ENCODE measurements at regions of chr15 and their contacts with region 1.

Region 1: GRCh38 chr15:93030430-93031105 is 58.4 kb downstream of the RGMA start:
- DNase-seq: peak; percentile 88

Region 2: GRCh38 chr15:92803847-92804609 is 226.5 kb before region 1 on chr15:
- intact Hi-C with region 1: loop called (anchors 5 kb)
- DNase-seq: peak; percentile 87

Region 3: GRCh38 chr15:93087825-93088199 is 57.2 kb after region 1 on chr15:
- intact Hi-C with region 1: loop called (anchors 2 kb)
- DNase-seq: no peak

Region 4: GRCh38 chr15:94119923-94120775 is 1089.6 kb after region 1 on chr15:
- intact Hi-C with region 1: loop called (anchors 2 kb)
- DNase-seq: no peak